ENCODE measurements at regions of chr19 and their contacts with region 1.

Region 1: DNA sequence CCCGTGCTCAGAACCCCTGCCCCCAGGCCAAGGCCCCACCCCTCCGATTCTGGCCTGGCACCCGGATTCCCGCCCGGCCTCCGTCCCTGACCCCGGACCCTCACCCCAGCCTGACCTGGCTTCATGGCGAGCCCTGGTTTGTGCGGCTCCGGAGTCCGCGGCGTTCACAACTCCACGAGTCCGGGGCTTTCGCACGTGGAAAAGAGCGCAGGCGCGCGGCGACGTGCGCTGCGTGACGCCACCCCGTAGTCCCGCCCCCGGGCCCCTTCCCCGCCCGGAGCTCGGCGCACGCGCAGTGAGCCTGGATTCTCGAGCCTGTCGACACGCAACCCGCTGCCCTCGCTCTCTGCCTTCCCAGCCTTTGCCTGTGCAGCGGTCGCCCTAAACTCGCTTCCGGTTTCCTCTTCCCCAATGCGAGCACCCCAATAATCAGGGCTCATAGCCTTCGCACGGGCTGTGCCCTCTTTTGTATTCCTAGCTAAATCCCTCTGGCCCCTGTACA is at the start of gene FBL:
- DNase-seq: peak; percentile 94 to 98 (median 98)
- H3K4me3 ChIP-seq: peak within 1 kb of the TSS; percentile 74
- H3K4me3 Mint-ChIP-seq: peak within 1 kb of the TSS; percentile 79 to 94 (median 90)
- H3K27ac ChIP-seq: peak within 1 kb of the TSS; percentile 81
- H3K27ac Mint-ChIP-seq: peak within 1 kb of the TSS; percentile 93 to 99 (median 96)
- H3K4me1 ChIP-seq: peaks cover 48% of the 10 kb centered on the region
- H3K4me1 Mint-ChIP-seq: peaks cover 45 to 57% (median 52%) of the 10 kb centered on the region in 3 donors
- H3K27me3 ChIP-seq: no peaks in the 10 kb centered on the region
- H3K27me3 Mint-ChIP-seq: no peaks in the 10 kb centered on the region
- total RNA-seq, gene FBL: 661 to 682 TPM

Region 2: DNA sequence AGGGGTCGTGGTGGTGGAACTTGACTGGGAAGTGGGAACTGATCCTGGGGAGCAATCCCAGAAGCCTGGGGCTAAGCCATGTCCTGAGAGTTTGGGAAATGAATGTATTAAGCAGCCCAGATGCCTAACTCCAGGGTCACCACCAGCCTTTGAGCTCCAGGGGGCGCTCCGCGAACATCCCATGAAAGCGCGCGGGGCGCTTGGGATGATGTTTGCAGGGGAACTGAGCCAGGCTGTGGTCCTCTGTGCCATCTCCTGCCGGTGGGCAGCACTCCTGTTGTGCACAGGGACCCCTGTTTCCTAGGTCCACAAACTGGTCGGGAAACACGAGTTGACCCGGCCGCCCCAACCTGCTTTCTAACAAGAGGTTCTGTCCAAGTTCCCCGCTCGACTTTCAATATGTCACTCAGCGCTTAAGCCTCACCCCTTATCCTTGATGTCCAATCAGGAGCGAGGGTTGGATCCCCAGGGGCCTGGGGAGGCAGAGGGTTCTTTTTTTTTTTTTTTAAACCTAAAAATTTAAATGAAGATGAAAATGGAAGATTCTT is 53.2 kb before region 1 on chr19:
- CTCF ChIA-PET with region 1: interaction called, 68 read pairs
- POLR2A ChIA-PET with region 1: interaction called, 4 read pairs
- DNase-seq: peak; percentile 59 to 79 (median 63)
- H3K4me3 ChIP-seq: peak overlapping the region; percentile 68
- H3K4me3 Mint-ChIP-seq: peak overlapping the region; percentile 66 to 91 (median 81)
- H3K27ac ChIP-seq: no peak overlapping the region
- H3K27ac Mint-ChIP-seq: peak overlapping the region in 3 of 8 donors; percentile 6 to 64 (median 61)
- H3K4me1 ChIP-seq: no peaks in the 10 kb centered on the region
- H3K4me1 Mint-ChIP-seq: peaks cover 0 to 7% (median 3%) of the 10 kb centered on the region in 3 donors
- H3K27me3 ChIP-seq: no peaks in the 10 kb centered on the region
- H3K27me3 Mint-ChIP-seq: peaks cover 3 to 5% of the 10 kb centered on the region in 2 donors

Region 3: GRCh38 chr19:39824143-39825092 is 21.8 kb before region 1 on chr19:
- CTCF ChIA-PET with region 1: interaction called, 10 read pairs
- POLR2A ChIA-PET with region 1: interaction called, 4 read pairs
- DNase-seq: peak; percentile 76 to 90 (median 83)
- H3K4me3 ChIP-seq: peak overlapping the region; percentile 82
- H3K4me3 Mint-ChIP-seq: no peak overlapping the region
- H3K27ac ChIP-seq: peak overlapping the region; percentile 38
- H3K27ac Mint-ChIP-seq: no peak overlapping the region
- H3K4me1 ChIP-seq: peaks cover 21% of the 10 kb centered on the region
- H3K4me1 Mint-ChIP-seq: peaks cover 14 to 20% (median 18%) of the 10 kb centered on the region in 3 donors
- H3K27me3 ChIP-seq: no peaks in the 10 kb centered on the region
- H3K27me3 Mint-ChIP-seq: no peaks in the 10 kb centered on the region

Region 4: GRCh38 chr19:39833464-39834286 is 12.6 kb before region 1 on chr19 and contains the start of gene DYRK1B:
- CTCF ChIA-PET with region 1: interaction called, 27 read pairs
- POLR2A ChIA-PET with region 1: interaction called, 20 read pairs
- DNase-seq: peak; percentile 97 to 99 (median 97)
- H3K4me3 ChIP-seq: peak within 1 kb of the TSS; percentile 96
- H3K4me3 Mint-ChIP-seq: peak within 1 kb of the TSS; percentile 80 to 95 (median 85)
- H3K27ac ChIP-seq: peak within 1 kb of the TSS; percentile 97
- H3K27ac Mint-ChIP-seq: peak within 1 kb of the TSS; percentile 70 to 98 (median 94)
- H3K4me1 ChIP-seq: peaks cover 19% of the 10 kb centered on the region
- H3K4me1 Mint-ChIP-seq: peaks cover 29 to 43% (median 31%) of the 10 kb centered on the region in 3 donors
- H3K27me3 ChIP-seq: no peaks in the 10 kb centered on the region
- H3K27me3 Mint-ChIP-seq: no peaks in the 10 kb centered on the region
- total RNA-seq, gene DYRK1B: 7.9 to 9.1 TPM

Region 5: GRCh38 chr19:39870171-39870590 is 24.0 kb after region 1 on chr19:
- CTCF ChIA-PET with region 1: no interaction called
- POLR2A ChIA-PET with region 1: no interaction called
- DNase-seq: no peak
- H3K4me3 ChIP-seq: no peak overlapping the region
- H3K4me3 Mint-ChIP-seq: no peak overlapping the region
- H3K27ac ChIP-seq: no peak overlapping the region
- H3K27ac Mint-ChIP-seq: peak overlapping the region in 2 of 8 donors; percentile 61 to 65
- H3K4me1 ChIP-seq: no peaks in the 10 kb centered on the region
- H3K4me1 Mint-ChIP-seq: no peaks in the 10 kb centered on the region
- H3K27me3 ChIP-seq: no peaks in the 10 kb centered on the region
- H3K27me3 Mint-ChIP-seq: no peaks in the 10 kb centered on the region